HCT116 (cell line): ENCODE measurements at regions of chr2 and their contacts with region 1.

Region 1: GRCh38 chr2:109715313-109715805 is 78.7 kb upstream of the RGPD5 start:
- DNase-seq: no peak
- ATAC-seq: peak; percentile 68
- H3K4me3 ChIP-seq: no peak overlapping the region
- H3K27ac ChIP-seq: no peak overlapping the region
- H3K4me1 ChIP-seq: no peaks in the 10 kb centered on the region
- H3K27me3 ChIP-seq: no peaks in the 10 kb centered on the region
- CTCF ChIP-seq: peak; percentile 22 to 46 (median 37); a peak in 4 of 6 replicates
- POLR2A ChIP-seq: no peak
- RAD21 ChIP-seq: peak; percentile 67

Region 2: GRCh38 chr2:108691447-108691846 is 1023.9 kb before region 1 on chr2:
- CTCF ChIA-PET with region 1: no interaction called
- POLR2A ChIA-PET with region 1: no interaction called
- RAD21 ChIA-PET with region 1: no interaction called
- intact Hi-C with region 1: no loop called
- DNase-seq: no peak
- ATAC-seq: no peak
- H3K4me3 ChIP-seq: no peak overlapping the region
- H3K27ac ChIP-seq: no peak overlapping the region
- H3K4me1 ChIP-seq: no peaks in the 10 kb centered on the region
- H3K27me3 ChIP-seq: no peaks in the 10 kb centered on the region
- CTCF ChIP-seq: no peak
- POLR2A ChIP-seq: no peak
- RAD21 ChIP-seq: no peak

Region 3: GRCh38 chr2:109516445-109517117 is 198.8 kb before region 1 on chr2:
- CTCF ChIA-PET with region 1: no interaction called
- POLR2A ChIA-PET with region 1: no interaction called
- RAD21 ChIA-PET with region 1: no interaction called
- intact Hi-C with region 1: loop called (anchors 1 kb)
- DNase-seq: peak; percentile 33
- ATAC-seq: peak; percentile 100
- H3K4me3 ChIP-seq: no peak overlapping the region
- H3K27ac ChIP-seq: no peak overlapping the region
- H3K4me1 ChIP-seq: peaks cover 0 to 5% of the 10 kb centered on the region in 2 experiments; a peak in 1 of 4 replicates
- H3K27me3 ChIP-seq: no peaks in the 10 kb centered on the region
- CTCF ChIP-seq: peak; percentile 91 to 94 (median 93)
- POLR2A ChIP-seq: no peak
- RAD21 ChIP-seq: peak; percentile 98

Region 4: GRCh38 chr2:109545828-109546713 is 169.3 kb before region 1 on chr2:
- CTCF ChIA-PET with region 1: interaction called, 17 read pairs
- POLR2A ChIA-PET with region 1: no interaction called
- RAD21 ChIA-PET with region 1: no interaction called
- intact Hi-C with region 1: no loop called
- DNase-seq: peak; percentile 28
- ATAC-seq: peak; percentile 95
- H3K4me3 ChIP-seq: no peak overlapping the region
- H3K27ac ChIP-seq: no peak overlapping the region
- H3K4me1 ChIP-seq: peaks cover 0 to 3% of the 10 kb centered on the region in 2 experiments; a peak in 1 of 4 replicates
- H3K27me3 ChIP-seq: no peaks in the 10 kb centered on the region
- CTCF ChIP-seq: peak; percentile 76 to 82 (median 77)
- POLR2A ChIP-seq: no peak
- RAD21 ChIP-seq: peak; percentile 87

Region 5: GRCh38 chr2:109736177-109736827 is 20.9 kb after region 1 on chr2:
- CTCF ChIA-PET with region 1: no interaction called
- POLR2A ChIA-PET with region 1: no interaction called
- RAD21 ChIA-PET with region 1: no interaction called
- intact Hi-C with region 1: no loop called
- DNase-seq: peak; percentile 62
- ATAC-seq: peak; percentile 98
- H3K4me3 ChIP-seq: no peak overlapping the region
- H3K27ac ChIP-seq: no peak overlapping the region
- H3K4me1 ChIP-seq: no peaks in the 10 kb centered on the region
- H3K27me3 ChIP-seq: no peaks in the 10 kb centered on the region
- CTCF ChIP-seq: peak; percentile 60 to 85 (median 81)
- POLR2A ChIP-seq: no peak
- RAD21 ChIP-seq: peak; percentile 95